Endothelial cell of umbilical vein (primary cell): ENCODE measurements at regions of chr4 and their contacts with region 1.

Region 1: DNA sequence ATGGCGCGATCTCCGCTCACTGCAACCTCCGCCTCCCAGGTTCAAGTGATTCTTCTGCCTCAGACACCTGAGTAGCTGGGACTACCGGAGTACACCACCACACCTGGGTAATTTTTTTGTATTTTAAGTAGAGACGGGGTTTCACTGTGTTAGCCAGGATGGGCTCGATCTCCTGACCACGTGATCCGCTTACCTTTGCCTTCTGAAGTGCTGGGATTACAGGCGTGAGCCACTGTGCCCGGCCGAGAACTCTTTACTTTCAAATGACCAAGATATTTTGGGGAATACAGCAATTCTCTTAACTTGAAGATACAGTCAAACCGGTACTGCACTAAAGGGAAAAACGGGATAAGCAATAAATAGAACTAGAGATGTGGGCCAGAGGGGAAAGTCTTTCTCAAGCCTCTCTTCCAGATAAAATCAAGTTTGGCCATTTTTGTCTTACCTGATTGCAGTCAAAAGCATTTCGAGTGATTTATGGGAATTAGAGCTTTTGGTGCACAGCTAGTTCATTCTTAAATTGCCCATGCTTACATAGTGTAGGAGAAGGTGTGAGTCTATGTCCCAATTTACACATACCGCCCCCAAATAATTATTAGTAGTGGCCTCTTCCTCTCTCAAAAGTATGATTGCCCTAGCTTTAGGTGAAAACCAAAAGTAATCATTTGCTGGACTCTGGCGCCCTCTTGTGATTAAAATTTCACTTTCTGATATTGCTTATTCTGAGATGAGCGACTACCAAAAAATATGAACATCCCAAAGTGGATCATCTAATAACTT is 53.2 kb upstream of the ABCG2 start:
- DNase-seq: peak; percentile 69
- H3K4me3 ChIP-seq: no peak overlapping the region
- H3K27ac ChIP-seq: no peak overlapping the region
- H3K4me1 ChIP-seq: no peaks in the 10 kb centered on the region
- H3K27me3 ChIP-seq: no peaks in the 10 kb centered on the region
- CTCF ChIP-seq: peak; percentile 41 to 43
- POLR2A ChIP-seq: no peak

Region 2: DNA sequence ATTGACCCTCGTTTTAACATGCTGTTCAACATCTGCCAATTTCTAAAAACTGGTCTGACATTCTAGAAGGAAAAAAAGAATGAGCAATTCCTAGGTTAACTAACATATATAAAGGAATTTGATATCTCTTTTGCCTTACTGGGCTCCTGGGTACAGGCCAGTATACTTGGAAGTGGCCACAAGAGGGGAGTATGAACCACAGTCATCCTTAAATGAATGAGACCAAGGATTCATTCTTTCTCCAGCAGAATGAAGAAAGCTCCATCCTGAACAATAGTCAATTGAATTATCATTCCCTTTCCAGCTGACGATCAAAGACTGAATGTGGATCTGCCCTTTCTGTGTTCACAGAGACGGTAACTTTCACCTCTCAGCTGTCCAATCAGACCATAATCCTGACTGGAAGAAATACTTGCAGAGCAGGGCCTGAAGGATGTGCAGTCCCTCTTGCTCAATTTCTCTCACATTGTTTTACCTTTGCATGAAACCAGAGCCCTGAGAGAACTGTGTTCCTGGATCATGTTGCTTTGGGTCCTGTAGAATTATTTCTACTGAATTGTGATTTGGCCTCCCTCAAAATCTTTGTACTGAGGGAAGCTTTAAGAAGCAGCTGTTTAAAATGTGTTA is 667.7 kb before region 1 on chr4:
- CTCF ChIA-PET with region 1: interaction called, 13 read pairs
- POLR2A ChIA-PET with region 1: no interaction called
- dilution Hi-C with region 1: no loop called
- intact Hi-C with region 1: no loop called
- DNase-seq: peak; percentile 48
- H3K4me3 ChIP-seq: no peak overlapping the region
- H3K27ac ChIP-seq: no peak overlapping the region
- H3K4me1 ChIP-seq: no peaks in the 10 kb centered on the region
- H3K27me3 ChIP-seq: peaks cover 0 to 3% of the 10 kb centered on the region in 2 experiments
- CTCF ChIP-seq: peak; percentile 29 to 47
- POLR2A ChIP-seq: no peak

Region 3: DNA sequence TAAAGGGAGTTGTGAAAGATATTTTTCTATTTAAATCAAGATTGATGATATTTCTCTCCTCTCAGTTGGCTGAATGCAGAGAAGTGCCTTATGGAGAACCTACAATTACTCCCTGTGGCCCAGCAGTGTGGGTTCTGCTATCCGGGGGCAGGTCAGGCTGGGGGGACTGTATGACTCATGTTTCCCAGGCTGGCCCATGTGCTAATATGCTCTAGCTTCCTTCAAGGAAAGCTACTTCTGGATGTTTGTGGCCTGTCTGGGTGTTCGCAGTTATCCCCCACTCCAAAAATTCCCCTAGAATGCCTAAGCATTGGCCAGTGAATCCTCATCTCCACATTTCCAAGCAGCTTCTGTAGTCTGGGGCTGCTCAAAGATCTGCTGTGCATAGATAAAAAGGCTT is 295.0 kb before region 1 on chr4:
- CTCF ChIA-PET with region 1: no interaction called
- POLR2A ChIA-PET with region 1: no interaction called
- dilution Hi-C with region 1: no loop called
- intact Hi-C with region 1: no loop called
- DNase-seq: no peak
- H3K4me3 ChIP-seq: no peak overlapping the region
- H3K27ac ChIP-seq: no peak overlapping the region
- H3K4me1 ChIP-seq: no peaks in the 10 kb centered on the region
- H3K27me3 ChIP-seq: no peaks in the 10 kb centered on the region
- CTCF ChIP-seq: no peak
- POLR2A ChIP-seq: no peak

Region 4: DNA sequence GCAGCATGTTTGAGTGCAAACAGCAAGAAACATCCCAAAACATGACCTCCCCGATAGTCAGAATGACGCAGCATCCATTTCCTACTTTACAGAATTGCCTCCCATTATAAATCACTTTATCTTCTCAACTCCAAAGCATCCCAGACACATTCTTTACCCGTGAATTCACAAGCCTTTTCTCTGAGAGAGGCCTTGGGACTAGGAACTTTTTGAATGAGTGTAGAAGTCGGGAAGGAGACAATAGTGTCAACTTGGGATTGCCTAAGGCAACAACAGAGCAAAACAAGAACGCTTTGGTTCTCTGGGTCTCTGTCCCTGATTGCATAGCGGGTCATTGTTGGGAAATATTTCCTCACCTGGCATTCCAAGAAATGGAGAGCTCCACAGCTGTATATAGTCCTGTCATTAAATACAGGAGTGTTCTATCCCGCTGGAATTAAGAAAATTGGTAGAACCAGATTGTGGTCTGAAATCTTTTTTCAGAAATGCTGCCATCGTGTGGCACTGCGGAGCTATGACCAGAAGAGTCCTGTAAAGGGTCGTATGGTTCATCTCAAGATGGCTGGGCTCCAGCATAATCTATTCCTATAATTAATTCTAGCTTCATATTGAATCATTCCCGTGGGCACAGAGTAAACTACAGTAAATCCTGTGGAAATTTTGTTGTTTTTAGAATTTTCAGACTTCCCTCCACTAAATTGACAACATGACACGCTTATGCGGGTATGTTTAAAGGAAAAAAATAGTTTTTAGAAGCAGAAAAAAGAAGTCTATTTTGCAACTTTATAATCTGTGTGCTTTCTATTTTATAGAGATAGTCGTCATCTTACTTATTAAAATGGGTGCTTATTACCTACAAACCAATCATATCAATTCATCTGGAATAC is 238.1 kb before region 1 on chr4:
- CTCF ChIA-PET with region 1: interaction called, 24 read pairs
- POLR2A ChIA-PET with region 1: no interaction called
- dilution Hi-C with region 1: no loop called
- intact Hi-C with region 1: loop called (anchors 1 kb)
- DNase-seq: peak; percentile 78
- H3K4me3 ChIP-seq: peak overlapping the region in 1 of 3 experiments; percentile 39
- H3K27ac ChIP-seq: peak overlapping the region; percentile 69
- H3K4me1 ChIP-seq: peaks cover 13% of the 10 kb centered on the region
- H3K27me3 ChIP-seq: no peaks in the 10 kb centered on the region
- CTCF ChIP-seq: peak; percentile 76 to 80
- POLR2A ChIP-seq: no peak

Region 5: GRCh38 chr4:88007304-88008121 is 204.2 kb before region 1 on chr4 and contains the start of gene PKD2:
- CTCF ChIA-PET with region 1: interaction called, 15 read pairs
- POLR2A ChIA-PET with region 1: no interaction called
- dilution Hi-C with region 1: no loop called
- intact Hi-C with region 1: no loop called
- DNase-seq: peak; percentile 73
- H3K4me3 ChIP-seq: peak within 1 kb of the TSS; percentile 66 to 89 (median 88)
- H3K27ac ChIP-seq: peak within 1 kb of the TSS; percentile 68
- H3K4me1 ChIP-seq: peaks cover 23% of the 10 kb centered on the region
- H3K27me3 ChIP-seq: no peaks in the 10 kb centered on the region
- CTCF ChIP-seq: no peak
- POLR2A ChIP-seq: peak; percentile 82
- total RNA-seq, gene PKD2: 27.0 and 33.5 TPM in 2 replicates

Region 6: GRCh38 chr4:88033309-88033708 is 178.4 kb before region 1 on chr4:
- CTCF ChIA-PET with region 1: interaction called, 295 read pairs
- POLR2A ChIA-PET with region 1: interaction called, 3 read pairs
- dilution Hi-C with region 1: no loop called
- intact Hi-C with region 1: loop called (anchors 1 kb)
- DNase-seq: peak; percentile 69
- H3K4me3 ChIP-seq: no peak overlapping the region
- H3K27ac ChIP-seq: no peak overlapping the region
- H3K4me1 ChIP-seq: no peaks in the 10 kb centered on the region
- H3K27me3 ChIP-seq: no peaks in the 10 kb centered on the region
- CTCF ChIP-seq: peak; percentile 43 to 55
- POLR2A ChIP-seq: no peak

Region 7: DNA sequence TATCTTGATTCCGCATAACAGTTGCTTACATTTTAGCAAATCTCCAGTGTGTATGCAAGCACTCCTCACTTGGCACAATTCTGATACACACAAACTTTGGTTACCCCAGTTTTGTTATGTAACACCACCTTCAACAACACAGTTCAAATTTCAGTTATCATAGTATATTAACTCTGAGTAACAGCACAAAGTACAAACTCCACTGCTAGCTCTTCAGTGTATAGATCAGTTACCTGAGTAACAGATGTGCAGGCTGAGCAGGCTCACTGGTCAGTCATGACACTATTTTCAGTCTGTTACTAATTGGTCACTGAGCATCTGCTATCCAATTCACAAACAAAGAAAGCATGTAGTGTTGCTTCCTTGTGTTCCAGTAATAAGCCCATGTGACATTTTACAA is 148.8 kb before region 1 on chr4:
- CTCF ChIA-PET with region 1: interaction called, 204 read pairs
- POLR2A ChIA-PET with region 1: no interaction called
- dilution Hi-C with region 1: no loop called
- intact Hi-C with region 1: no loop called
- DNase-seq: no peak
- H3K4me3 ChIP-seq: no peak overlapping the region
- H3K27ac ChIP-seq: no peak overlapping the region
- H3K4me1 ChIP-seq: peaks cover 6% of the 10 kb centered on the region
- H3K27me3 ChIP-seq: no peaks in the 10 kb centered on the region
- CTCF ChIP-seq: no peak
- POLR2A ChIP-seq: no peak

Region 8: DNA sequence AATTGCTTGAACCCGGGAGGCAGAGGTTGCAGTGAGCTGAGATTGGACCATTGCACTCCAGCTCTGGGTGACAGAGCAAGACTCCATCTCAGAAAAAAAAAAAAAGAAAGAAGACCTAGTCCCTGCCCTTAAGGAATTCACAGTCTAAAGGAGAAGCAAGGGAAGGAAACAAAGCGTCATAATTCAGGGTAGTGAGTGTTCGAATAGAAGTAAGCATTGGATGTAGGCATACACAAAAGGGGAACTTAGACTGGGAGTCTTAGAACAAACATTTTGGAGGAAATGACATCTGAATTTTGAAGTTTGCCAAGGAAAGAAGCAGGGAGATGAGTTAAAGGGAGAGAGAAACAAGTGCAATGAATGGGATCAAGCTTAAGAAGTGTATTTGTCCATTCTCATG is 40.3 kb after region 1 on chr4:
- CTCF ChIA-PET with region 1: no interaction called
- POLR2A ChIA-PET with region 1: no interaction called
- dilution Hi-C with region 1: no loop called
- intact Hi-C with region 1: no loop called
- DNase-seq: no peak
- H3K4me3 ChIP-seq: no peak overlapping the region
- H3K27ac ChIP-seq: no peak overlapping the region
- H3K4me1 ChIP-seq: no peaks in the 10 kb centered on the region
- H3K27me3 ChIP-seq: no peaks in the 10 kb centered on the region
- CTCF ChIP-seq: no peak
- POLR2A ChIP-seq: no peak